ENCODE measurements at regions of chr6 and their contacts with region 1.

Region 1: GRCh38 chr6:57316581-57317059 is 810 bp upstream of the PRIM2 start:
- DNase-seq: peak; percentile 92
- ATAC-seq: peak; percentile 69
- H3K4me3 ChIP-seq: peak overlapping the region; percentile 90
- H3K27ac ChIP-seq: peak overlapping the region; percentile 80
- H3K4me1 ChIP-seq: peaks cover 14% of the 10 kb centered on the region
- H3K27me3 ChIP-seq: no peaks in the 10 kb centered on the region
- CTCF ChIP-seq: peak; percentile 94
- POLR2A ChIP-seq: peak; percentile 63; the same call in 1 of the 2 replicates
- RAD21 ChIP-seq: peak; percentile 98

Region 2: DNA sequence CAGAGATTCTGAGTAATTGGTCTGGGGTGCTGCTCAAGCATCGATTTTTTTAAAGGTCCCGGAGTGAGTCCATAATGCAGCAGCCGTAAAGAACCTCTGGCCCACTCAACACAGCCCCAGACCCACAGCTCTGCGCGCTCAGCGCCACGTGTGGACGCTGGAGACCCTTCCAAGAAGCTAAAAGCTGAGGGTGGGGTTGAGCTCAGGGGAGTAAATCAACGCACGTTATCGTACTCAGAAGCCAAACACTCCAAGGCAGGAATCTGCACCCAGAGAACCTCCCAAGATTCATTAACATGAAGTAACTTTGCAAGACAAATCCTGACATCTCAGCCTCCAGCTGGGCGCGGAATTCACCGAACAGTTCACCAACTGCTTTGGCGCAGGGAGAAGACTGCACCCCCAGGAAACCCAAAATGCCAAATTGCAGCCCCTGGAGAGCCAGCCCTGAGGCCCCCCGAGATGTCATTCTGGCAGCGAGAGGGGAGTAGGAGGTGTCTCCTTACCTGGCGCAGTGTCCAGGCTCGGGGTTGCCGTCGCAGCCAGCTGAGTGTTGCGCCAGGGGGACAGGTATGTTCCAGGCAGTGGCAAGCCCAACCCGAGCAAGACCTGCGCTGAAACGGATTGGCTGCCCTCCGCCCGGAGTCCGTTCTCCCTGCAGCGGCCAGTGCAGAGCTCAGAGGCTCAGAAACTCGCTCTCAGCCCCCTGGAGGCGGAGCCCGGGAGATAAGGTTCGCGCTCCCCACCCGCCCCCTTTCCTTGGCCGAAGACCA is 1069.6 kb before region 1 on chr6 and contains the start of gene COL21A1:
- CTCF ChIA-PET with region 1: no interaction called
- POLR2A ChIA-PET with region 1: no interaction called
- dilution Hi-C with region 1: no loop called
- in situ Hi-C with region 1: no loop called
- intact Hi-C with region 1: no loop called
- DNase-seq: no peak
- ATAC-seq: peak; percentile 83
- H3K4me3 ChIP-seq: peak within 1 kb of the TSS; percentile 27; the same call in 1 of the 2 replicates
- H3K27ac ChIP-seq: no peak within 1 kb of the TSS
- H3K4me1 ChIP-seq: no peaks in the 10 kb centered on the region
- H3K27me3 ChIP-seq: peaks cover 22% of the 10 kb centered on the region
- CTCF ChIP-seq: peak; percentile 8; the same call in 1 of the 2 replicates
- POLR2A ChIP-seq: no peak
- RAD21 ChIP-seq: no peak
- total RNA-seq, gene COL21A1: not detected in 2 replicates

Region 3: GRCh38 chr6:56637640-56638039 is 679.0 kb before region 1 on chr6:
- CTCF ChIA-PET with region 1: no interaction called
- POLR2A ChIA-PET with region 1: no interaction called
- dilution Hi-C with region 1: no loop called
- in situ Hi-C with region 1: loop called (anchors 25 kb)
- intact Hi-C with region 1: loop called (anchors 5 kb)
- DNase-seq: peak; percentile 80
- ATAC-seq: peak; percentile 81
- H3K4me3 ChIP-seq: no peak overlapping the region
- H3K27ac ChIP-seq: no peak overlapping the region
- H3K4me1 ChIP-seq: peaks cover 5% of the 10 kb centered on the region
- H3K27me3 ChIP-seq: no peaks in the 10 kb centered on the region
- CTCF ChIP-seq: peak; percentile 74
- POLR2A ChIP-seq: no peak
- RAD21 ChIP-seq: peak; percentile 78

Region 4: GRCh38 chr6:56902641-56903464 is 413.8 kb before region 1 on chr6:
- CTCF ChIA-PET with region 1: interaction called, 6 read pairs
- POLR2A ChIA-PET with region 1: no interaction called
- dilution Hi-C with region 1: no loop called
- in situ Hi-C with region 1: loop called (anchors 5 kb)
- intact Hi-C with region 1: loop called (anchors 1 kb)
- DNase-seq: peak; percentile 76
- ATAC-seq: peak; percentile 48
- H3K4me3 ChIP-seq: no peak overlapping the region
- H3K27ac ChIP-seq: peak overlapping the region; percentile 58
- H3K4me1 ChIP-seq: peaks cover 19% of the 10 kb centered on the region
- H3K27me3 ChIP-seq: no peaks in the 10 kb centered on the region
- CTCF ChIP-seq: peak; percentile 78
- POLR2A ChIP-seq: no peak
- RAD21 ChIP-seq: peak; percentile 77

Region 5: DNA sequence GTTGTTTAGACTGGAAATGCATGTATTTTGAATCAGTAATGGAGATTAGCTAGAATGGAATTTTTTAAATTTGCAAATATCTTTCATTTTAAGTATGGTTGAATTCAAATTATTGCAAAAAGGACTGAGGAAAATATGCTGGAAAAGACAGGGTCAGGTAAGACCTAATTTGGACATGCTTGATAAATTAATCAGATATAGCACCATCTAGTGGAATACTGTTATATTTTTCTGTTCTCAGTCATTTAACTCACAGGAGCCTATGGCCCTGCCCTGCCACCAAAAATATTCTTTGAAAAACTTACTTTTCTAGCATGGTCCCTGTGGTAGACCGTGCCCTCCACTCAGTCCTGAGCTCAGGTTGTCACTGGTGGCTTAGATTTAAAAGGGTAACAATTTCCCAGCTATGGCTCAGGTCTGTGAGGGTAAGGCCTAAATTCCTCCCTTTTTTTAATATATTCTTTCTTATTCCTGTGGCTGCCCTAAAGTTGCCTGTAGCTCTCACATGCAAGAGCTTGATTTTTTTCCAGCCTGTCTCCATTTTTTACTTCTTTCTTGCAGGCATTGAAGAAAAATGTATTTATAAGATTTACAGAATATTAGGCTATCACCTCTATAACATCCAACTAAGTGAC is 295.4 kb before region 1 on chr6:
- CTCF ChIA-PET with region 1: no interaction called
- POLR2A ChIA-PET with region 1: no interaction called
- dilution Hi-C with region 1: no loop called
- in situ Hi-C with region 1: no loop called
- intact Hi-C with region 1: loop called (anchors 2 kb)
- DNase-seq: peak; percentile 64
- ATAC-seq: peak; percentile 91
- H3K4me3 ChIP-seq: no peak overlapping the region
- H3K27ac ChIP-seq: no peak overlapping the region
- H3K4me1 ChIP-seq: no peaks in the 10 kb centered on the region
- H3K27me3 ChIP-seq: no peaks in the 10 kb centered on the region
- CTCF ChIP-seq: peak; percentile 58
- POLR2A ChIP-seq: no peak
- RAD21 ChIP-seq: peak; percentile 50

Region 6: GRCh38 chr6:57172136-57173055 is 144.2 kb before region 1 on chr6 and contains the start of gene BAG2:
- CTCF ChIA-PET with region 1: no interaction called
- POLR2A ChIA-PET with region 1: no interaction called
- dilution Hi-C with region 1: no loop called
- in situ Hi-C with region 1: no loop called
- intact Hi-C with region 1: loop called (anchors 2 kb)
- DNase-seq: peak; percentile 90
- ATAC-seq: peak; percentile 89
- H3K4me3 ChIP-seq: peak within 1 kb of the TSS; percentile 97
- H3K27ac ChIP-seq: peak within 1 kb of the TSS; percentile 98
- H3K4me1 ChIP-seq: peaks cover 9% of the 10 kb centered on the region
- H3K27me3 ChIP-seq: no peaks in the 10 kb centered on the region
- CTCF ChIP-seq: no peak
- POLR2A ChIP-seq: peak; percentile 85
- RAD21 ChIP-seq: no peak
- total RNA-seq, gene BAG2: 10.0 and 19.2 TPM in 2 replicates

Region 7: GRCh38 chr6:57190140-57190539 is 126.5 kb before region 1 on chr6:
- CTCF ChIA-PET with region 1: interaction called, 7 read pairs
- POLR2A ChIA-PET with region 1: interaction called, 3 read pairs
- dilution Hi-C with region 1: no loop called
- in situ Hi-C with region 1: no loop called
- intact Hi-C with region 1: loop called (anchors 1 kb)
- DNase-seq: peak; percentile 47
- ATAC-seq: peak; percentile 36; the same call in 1 of the 2 replicates
- H3K4me3 ChIP-seq: no peak overlapping the region
- H3K27ac ChIP-seq: no peak overlapping the region
- H3K4me1 ChIP-seq: peaks cover 2% of the 10 kb centered on the region; the same call in 1 of the 2 replicates
- H3K27me3 ChIP-seq: no peaks in the 10 kb centered on the region
- CTCF ChIP-seq: peak; percentile 52
- POLR2A ChIP-seq: no peak
- RAD21 ChIP-seq: peak; percentile 65

Region 8: GRCh38 chr6:57267586-57268293 is 48.9 kb before region 1 on chr6:
- CTCF ChIA-PET with region 1: interaction called, 6 read pairs
- POLR2A ChIA-PET with region 1: interaction called, 5 read pairs
- dilution Hi-C with region 1: no loop called
- in situ Hi-C with region 1: loop called (anchors 5 kb)
- intact Hi-C with region 1: loop called (anchors 1 kb)
- DNase-seq: peak; percentile 99
- ATAC-seq: peak; percentile 89
- H3K4me3 ChIP-seq: no peak overlapping the region
- H3K27ac ChIP-seq: peak overlapping the region; percentile 93
- H3K4me1 ChIP-seq: peaks cover 16% of the 10 kb centered on the region
- H3K27me3 ChIP-seq: no peaks in the 10 kb centered on the region
- CTCF ChIP-seq: peak; percentile 85
- POLR2A ChIP-seq: no peak
- RAD21 ChIP-seq: peak; percentile 70